CD4-positive, alpha-beta memory T cell (primary cell): ENCODE measurements at regions of chr11 and their contacts with region 1.

Region 1: DNA sequence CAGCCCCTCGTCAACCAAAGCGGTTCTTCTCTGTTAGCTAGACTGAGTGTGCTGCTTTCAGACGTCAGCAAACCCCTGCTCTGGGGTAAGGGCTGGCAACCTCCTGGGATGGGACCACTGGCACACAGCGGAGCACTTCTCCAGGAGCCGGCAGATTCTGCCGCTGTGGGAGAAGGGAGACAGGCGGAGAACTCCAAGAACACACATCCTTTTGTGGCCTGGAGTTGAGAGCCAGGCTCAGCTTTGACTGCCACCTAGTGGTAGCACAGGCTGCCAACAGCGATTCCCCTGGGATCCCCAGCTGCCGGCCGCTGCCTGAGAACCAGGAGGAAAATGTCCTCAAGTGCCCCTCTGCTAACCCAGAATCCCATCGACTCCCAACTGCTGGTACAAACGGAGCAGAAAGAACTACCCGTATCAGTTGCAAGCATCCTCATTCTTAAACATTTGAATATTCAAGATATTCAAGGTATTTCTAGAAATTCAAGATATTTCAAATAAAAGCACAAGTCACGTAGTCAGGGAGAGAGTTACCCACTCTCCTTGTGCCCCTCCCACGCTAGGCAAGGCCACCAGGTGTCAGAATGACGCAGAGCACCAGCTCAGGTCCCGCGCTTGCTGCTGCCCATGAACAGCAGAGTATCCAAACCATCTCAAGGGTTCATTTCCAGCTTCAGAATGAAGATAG is 4.9 kb downstream of the LTO1 start:
- DNase-seq: peak; percentile 40 to 54 (median 52)
- H3K4me3 ChIP-seq: no peak overlapping the region
- H3K4me3 Mint-ChIP-seq: no peak overlapping the region
- H3K27ac ChIP-seq: no peak overlapping the region
- H3K27ac Mint-ChIP-seq: peak overlapping the region in 6 of 7 donors; percentile 0 to 70 (median 54)
- H3K4me1 ChIP-seq: peaks cover 37% of the 10 kb centered on the region
- H3K4me1 Mint-ChIP-seq: peaks cover 14 to 42% (median 31%) of the 10 kb centered on the region in 4 donors
- H3K27me3 ChIP-seq: no peaks in the 10 kb centered on the region
- H3K27me3 Mint-ChIP-seq: peaks cover 0 to under 1% of the 10 kb centered on the region in 2 donors

Region 2: DNA sequence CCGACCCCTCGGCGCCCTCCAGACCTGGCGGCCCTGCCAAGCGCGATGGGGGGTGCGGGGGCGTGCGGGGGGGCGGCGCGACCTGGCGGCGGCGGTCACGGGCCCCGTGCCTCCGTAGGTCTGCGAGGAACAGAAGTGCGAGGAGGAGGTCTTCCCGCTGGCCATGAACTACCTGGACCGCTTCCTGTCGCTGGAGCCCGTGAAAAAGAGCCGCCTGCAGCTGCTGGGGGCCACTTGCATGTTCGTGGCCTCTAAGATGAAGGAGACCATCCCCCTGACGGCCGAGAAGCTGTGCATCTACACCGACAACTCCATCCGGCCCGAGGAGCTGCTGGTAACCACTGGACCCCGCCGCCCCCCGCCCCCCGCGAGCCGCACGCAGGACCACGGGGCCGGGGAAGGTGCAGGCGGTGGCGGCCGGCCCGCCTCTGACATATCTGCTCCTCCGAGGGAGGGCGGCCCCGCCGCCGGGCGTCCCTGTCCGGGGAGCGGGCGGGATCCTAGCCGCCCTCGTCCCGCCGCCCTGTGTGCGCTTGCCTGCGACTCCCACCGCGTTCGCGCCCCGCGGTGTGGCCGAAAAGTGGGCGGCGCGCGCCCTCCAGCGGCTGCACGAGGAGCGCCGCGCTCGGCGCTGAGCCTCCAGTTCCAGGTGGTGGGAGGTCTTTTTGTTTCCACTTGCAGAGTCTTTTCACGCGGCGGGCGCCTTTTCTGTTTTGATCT is 27.2 kb before region 1 on chr11:
- CTCF ChIA-PET with region 1: interaction called, 10 read pairs
- POLR2A ChIA-PET with region 1: interaction called, 8 read pairs
- intact Hi-C with region 1: loop called (anchors 2 kb)
- DNase-seq: peak; percentile 59 to 82 (median 78)
- H3K4me3 ChIP-seq: peak overlapping the region in 1 of 2 donors; percentile 64
- H3K4me3 Mint-ChIP-seq: peak overlapping the region; percentile 70 to 87 (median 76)
- H3K27ac ChIP-seq: no peak overlapping the region
- H3K27ac Mint-ChIP-seq: peak overlapping the region in 1 of 7 donors; percentile 10
- H3K4me1 ChIP-seq: peaks cover 40% of the 10 kb centered on the region
- H3K4me1 Mint-ChIP-seq: peaks cover 11 to 25% (median 18%) of the 10 kb centered on the region in 4 donors
- H3K27me3 ChIP-seq: peaks cover 21% of the 10 kb centered on the region
- H3K27me3 Mint-ChIP-seq: peaks cover 14 to 22% of the 10 kb centered on the region in 2 donors

Region 3: DNA sequence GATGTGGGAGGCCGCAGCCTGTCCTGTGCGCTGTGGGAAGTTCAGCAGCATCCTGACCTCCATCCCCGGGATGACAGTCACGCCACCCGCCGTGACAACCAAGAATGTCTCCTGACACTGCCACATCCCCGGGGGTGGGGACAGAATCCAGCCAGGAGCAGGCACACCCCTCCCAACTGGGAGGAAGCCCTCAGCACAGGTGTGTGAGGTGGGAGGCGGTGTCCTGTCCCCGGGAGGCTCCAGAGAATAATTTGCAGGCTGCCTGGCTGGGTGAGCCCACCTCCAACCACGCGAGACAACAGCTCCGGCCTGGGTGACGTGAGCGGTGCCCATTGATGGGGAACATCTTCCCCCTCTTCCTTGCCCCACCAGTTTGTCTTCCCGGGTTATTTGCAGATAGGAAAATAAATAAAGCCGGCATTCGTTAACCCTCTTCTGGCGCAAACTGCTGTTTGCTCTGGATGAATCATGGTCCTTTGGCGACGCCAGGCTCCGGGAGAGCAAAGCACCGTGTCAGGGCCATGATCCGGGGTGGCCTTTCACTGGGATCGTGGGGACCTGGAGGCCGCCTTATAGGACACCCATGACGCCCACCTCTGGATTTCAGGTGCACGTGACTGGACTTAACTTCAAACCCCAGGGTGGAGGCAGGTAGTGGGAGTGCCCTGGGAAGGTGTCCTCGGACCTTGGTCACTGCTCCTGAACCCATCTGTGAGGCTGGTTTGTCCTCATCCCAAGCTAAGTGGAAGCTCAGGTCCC is 15.6 kb before region 1 on chr11:
- CTCF ChIA-PET with region 1: interaction called, 10 read pairs
- POLR2A ChIA-PET with region 1: interaction called, 4 read pairs
- intact Hi-C with region 1: no loop called
- DNase-seq: no peak
- H3K4me3 ChIP-seq: no peak overlapping the region
- H3K4me3 Mint-ChIP-seq: no peak overlapping the region
- H3K27ac ChIP-seq: no peak overlapping the region
- H3K27ac Mint-ChIP-seq: no peak overlapping the region
- H3K4me1 ChIP-seq: no peaks in the 10 kb centered on the region
- H3K4me1 Mint-ChIP-seq: peaks cover 0 to under 1% (median 0%) of the 10 kb centered on the region in 4 donors
- H3K27me3 ChIP-seq: no peaks in the 10 kb centered on the region
- H3K27me3 Mint-ChIP-seq: no peaks in the 10 kb centered on the region

Region 4: DNA sequence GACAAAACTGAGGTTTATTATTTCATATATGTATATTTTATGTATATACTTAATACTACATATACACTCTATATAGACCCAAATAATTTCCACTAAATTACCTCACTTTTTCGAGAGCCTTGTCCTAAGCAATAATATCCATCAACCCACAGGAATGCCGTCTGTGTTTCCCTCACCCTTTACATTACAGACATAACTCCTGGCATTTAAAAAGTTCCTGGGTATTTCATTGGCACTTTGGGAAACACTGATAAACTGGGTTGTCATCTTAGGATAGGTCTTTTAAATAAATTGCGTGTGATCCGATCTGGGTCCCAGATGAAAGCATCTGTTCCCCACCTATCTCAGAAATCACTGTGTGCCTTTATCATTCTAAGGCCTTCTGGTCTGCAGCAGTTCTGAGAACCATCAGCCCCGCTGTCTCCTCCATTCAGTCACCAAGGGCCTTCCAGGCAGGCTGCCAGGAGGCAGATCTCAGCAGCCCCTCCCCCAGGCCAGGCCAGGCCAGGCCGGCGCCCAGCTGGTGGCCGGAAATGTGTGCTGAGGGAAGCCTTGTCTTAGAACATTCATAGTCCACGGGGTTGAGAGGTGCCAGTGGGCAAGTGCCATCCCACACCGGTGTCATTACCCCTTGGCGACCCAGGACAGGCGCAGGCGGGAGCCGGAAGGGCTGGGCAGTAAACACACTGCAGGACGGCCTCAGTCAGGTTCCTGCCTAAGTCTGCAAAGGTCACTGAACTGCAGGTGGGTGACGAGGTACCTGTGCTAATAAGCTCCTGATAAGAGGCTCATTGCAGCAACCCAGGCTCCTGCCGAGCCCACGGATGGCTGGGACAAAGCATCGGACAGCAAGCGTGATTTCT is 30.2 kb after region 1 on chr11:
- CTCF ChIA-PET with region 1: no interaction called
- POLR2A ChIA-PET with region 1: no interaction called
- intact Hi-C with region 1: no loop called
- DNase-seq: no peak
- H3K4me3 ChIP-seq: no peak overlapping the region
- H3K4me3 Mint-ChIP-seq: peak overlapping the region in 2 of 8 donors; percentile 35 to 54
- H3K27ac ChIP-seq: no peak overlapping the region
- H3K27ac Mint-ChIP-seq: no peak overlapping the region
- H3K4me1 ChIP-seq: peaks cover 7% of the 10 kb centered on the region
- H3K4me1 Mint-ChIP-seq: peaks cover 1 to 15% (median 6%) of the 10 kb centered on the region in 4 donors
- H3K27me3 ChIP-seq: peaks cover 21% of the 10 kb centered on the region
- H3K27me3 Mint-ChIP-seq: peaks cover 30 to 33% of the 10 kb centered on the region in 2 donors